Body of pancreas (tissue), 4 donors: ENCODE measurements at regions of chr1 and their contacts with region 1.

Region 1: DNA sequence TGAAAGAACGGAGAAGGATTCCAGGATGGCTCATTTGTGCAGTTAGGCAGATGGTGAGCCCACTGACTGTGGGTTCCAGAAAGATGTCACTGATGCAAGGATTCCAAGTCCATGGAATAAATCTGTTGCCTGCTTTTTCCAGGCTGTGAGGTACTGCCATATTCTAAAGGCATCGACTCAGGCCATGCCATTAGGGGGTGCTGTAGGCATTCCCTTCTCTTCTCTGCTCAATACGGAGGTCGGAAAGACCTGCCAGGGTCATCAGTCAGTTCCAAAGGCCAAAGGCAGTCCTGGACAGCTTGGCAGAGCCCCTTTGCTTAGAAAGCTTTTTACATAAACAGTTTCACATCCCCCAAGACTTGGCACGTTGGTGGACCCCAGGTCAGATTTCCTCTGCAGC is 31.7 kb upstream of the TMEM125 start:
- DNase-seq: peak; percentile 85 to 90 (median 87)
- ATAC-seq: peak; percentile 86
- H3K4me3 ChIP-seq: no peak overlapping the region
- H3K27ac ChIP-seq: no peak overlapping the region
- H3K4me1 ChIP-seq: peaks cover 18% of the 10 kb centered on the region
- H3K27me3 ChIP-seq: no peaks in the 10 kb centered on the region
- CTCF ChIP-seq: peak; percentile 58 to 92 (median 87)
- POLR2A ChIP-seq: no peak

Region 2: DNA sequence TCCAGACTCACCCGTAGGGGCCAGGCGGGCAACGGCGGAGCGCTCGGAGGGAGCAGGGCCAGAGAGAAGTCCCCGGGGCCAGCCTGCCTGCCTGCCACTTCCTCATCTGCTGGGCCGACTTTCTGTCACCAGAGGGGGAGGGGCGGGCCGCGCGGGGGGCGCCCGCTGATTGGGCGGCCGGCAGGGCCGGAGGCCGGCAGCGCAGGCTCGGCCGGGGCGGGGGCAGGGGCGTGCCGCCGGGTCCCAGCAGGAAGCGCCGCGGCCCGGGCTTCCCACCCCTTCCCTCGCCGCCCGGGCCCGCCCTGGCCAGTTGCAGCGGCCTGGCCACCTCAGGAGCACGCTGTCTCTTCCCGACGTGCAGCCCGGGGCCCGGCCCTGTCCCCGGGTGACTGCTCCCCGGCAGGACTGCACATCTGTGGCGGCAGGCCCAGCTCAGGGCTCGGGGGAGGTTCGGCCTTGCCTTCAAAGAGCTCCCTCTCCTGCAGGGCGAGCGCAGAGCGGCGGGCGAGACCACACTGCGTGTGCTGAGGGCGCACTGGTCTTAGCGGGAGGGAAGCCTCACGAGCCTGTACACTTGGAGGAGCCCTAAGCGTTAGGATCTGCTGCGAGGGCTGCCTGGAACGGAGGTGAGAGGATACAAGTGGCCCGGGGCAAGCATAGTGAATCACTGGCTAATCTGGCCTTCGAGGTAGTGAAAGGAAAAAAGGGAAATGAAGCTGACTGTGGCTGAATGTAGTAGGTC is 130.0 kb after region 1 on chr1 and contains the start of gene ELOVL1:
- intact Hi-C with region 1: loop called (anchors 10 kb)
- DNase-seq: peak; percentile 94 to 96 (median 94)
- ATAC-seq: peak; percentile 94
- H3K4me3 ChIP-seq: peak within 1 kb of the TSS; percentile 54 to 69
- H3K27ac ChIP-seq: peak within 1 kb of the TSS; percentile 84 to 94 (median 90)
- H3K4me1 ChIP-seq: peaks cover 28% of the 10 kb centered on the region
- H3K27me3 ChIP-seq: no peaks in the 10 kb centered on the region
- CTCF ChIP-seq: peak in 5 of 7 experiments; percentile 4 to 39 (median 35)
- POLR2A ChIP-seq: peak; percentile 73 to 86 (median 86)
- total RNA-seq, gene ELOVL1: 17.5 to 21.8 TPM

Region 3: GRCh38 chr1:43383449-43383848 is 145.4 kb after region 1 on chr1:
- intact Hi-C with region 1: no loop called
- DNase-seq: no peak
- ATAC-seq: no peak
- H3K4me3 ChIP-seq: no peak overlapping the region
- H3K27ac ChIP-seq: no peak overlapping the region
- H3K4me1 ChIP-seq: peaks cover 17% of the 10 kb centered on the region
- H3K27me3 ChIP-seq: no peaks in the 10 kb centered on the region
- CTCF ChIP-seq: peak in 4 of 7 experiments; percentile 28 to 44 (median 37)
- POLR2A ChIP-seq: no peak

Region 4: DNA sequence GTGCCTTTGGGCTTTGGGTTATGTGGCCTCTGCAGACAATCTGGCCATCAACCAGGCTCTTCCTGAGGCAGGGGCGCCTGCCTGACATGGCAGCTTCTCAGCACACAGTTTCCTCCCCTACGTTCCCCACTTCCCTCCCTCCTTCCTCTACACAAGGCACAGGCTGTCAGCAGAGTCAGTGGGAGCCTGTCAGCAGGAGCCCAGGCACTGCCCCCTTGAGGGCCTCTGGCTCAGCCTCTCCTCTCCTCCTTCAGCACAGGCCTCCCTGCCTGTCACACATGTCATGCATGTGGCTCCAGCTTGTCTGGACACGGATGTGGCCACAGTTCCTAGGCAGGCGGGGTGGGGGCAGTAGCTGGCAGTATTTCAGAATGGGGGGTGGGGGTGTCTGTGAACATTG is 643.3 kb after region 1 on chr1:
- intact Hi-C with region 1: no loop called
- DNase-seq: no peak
- ATAC-seq: no peak
- H3K4me3 ChIP-seq: no peak overlapping the region
- H3K27ac ChIP-seq: no peak overlapping the region
- H3K4me1 ChIP-seq: no peaks in the 10 kb centered on the region
- H3K27me3 ChIP-seq: no peaks in the 10 kb centered on the region
- CTCF ChIP-seq: no peak
- POLR2A ChIP-seq: no peak